Mucosa of descending colon (tissue), 3 donors: ENCODE measurements at regions of chr14 and their contacts with region 1.

Region 1: GRCh38 chr14:20413045-20413799 is at the start of gene TEP1:
- DNase-seq: peak; percentile 94 to 95 (median 94)
- ATAC-seq: peak; percentile 87
- H3K4me3 ChIP-seq: peak within 1 kb of the TSS; percentile 75
- H3K4me1 ChIP-seq: peaks cover 47% of the 10 kb centered on the region
- CTCF ChIP-seq: no peak
- total RNA-seq, gene TEP1: 68.7 to 121 (median 85.8) TPM

Region 2: DNA sequence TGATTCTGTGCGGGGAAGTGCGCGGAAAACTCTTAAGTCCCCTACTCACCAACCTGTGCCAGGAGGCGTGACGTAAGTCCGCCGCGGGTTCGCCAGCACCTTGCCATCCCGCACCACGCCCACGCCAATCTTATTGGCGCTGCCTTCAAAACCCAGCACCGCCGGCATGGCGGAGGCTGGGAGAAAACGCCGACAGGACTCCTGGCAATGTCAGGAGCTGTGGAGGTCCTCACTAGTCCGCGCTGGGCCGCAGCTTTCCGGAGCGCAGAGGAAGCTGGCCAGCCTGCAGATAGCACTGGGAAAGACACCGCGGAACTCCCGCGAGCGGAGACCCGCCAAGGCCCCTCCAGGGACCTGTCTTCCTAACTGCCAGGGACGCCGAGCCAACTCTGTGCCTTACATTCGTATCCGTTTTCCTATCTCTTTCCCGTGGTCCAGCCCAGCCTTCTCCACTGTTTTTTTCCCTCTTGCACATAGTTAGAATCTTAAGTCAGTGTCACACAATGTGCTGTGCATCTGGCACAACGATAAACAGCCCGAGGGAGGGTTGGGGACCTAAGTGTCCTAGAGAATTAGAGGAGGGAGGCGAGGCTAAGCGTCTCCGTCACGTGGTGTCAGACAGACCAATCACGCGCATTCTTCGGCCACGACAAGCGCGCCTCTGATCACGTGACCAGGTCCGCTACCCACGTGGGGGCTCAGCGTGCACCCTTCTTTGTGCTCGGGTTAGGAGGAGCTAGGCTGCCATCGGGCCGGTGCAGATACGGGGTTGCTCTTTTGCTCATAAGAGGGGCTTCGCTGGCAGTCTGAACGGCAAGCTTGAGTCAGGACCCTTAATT is 41.5 kb after region 1 on chr14 and contains the starts of genes APEX1 and OSGEP:
- intact Hi-C with region 1: loop called in 1 of 2 experiments (anchors 2 kb)
- DNase-seq: peak; percentile 96 to 99 (median 99)
- ATAC-seq: peak; percentile 93
- H3K4me3 ChIP-seq: peak within 1 kb of the TSS; percentile 42
- H3K4me1 ChIP-seq: peaks cover 25% of the 10 kb centered on the region
- CTCF ChIP-seq: no peak
- total RNA-seq, gene APEX1: 83.9 to 115 (median 93.8) TPM
- total RNA-seq, gene OSGEP: 32.7 to 52.0 (median 35.9) TPM

Region 3: GRCh38 chr14:20461274-20462001 is 48.2 kb after region 1 on chr14 and contains the start of gene PIP4P1:
- intact Hi-C with region 1: loop called in 1 of 2 experiments (anchors 5 kb)
- DNase-seq: peak; percentile 98 to 100 (median 99)
- ATAC-seq: peak; percentile 94
- H3K4me3 ChIP-seq: peak within 1 kb of the TSS; percentile 79
- H3K4me1 ChIP-seq: peaks cover 16% of the 10 kb centered on the region
- CTCF ChIP-seq: no peak
- total RNA-seq, gene PIP4P1: 40.6 to 48.4 (median 45.5) TPM

Region 4: DNA sequence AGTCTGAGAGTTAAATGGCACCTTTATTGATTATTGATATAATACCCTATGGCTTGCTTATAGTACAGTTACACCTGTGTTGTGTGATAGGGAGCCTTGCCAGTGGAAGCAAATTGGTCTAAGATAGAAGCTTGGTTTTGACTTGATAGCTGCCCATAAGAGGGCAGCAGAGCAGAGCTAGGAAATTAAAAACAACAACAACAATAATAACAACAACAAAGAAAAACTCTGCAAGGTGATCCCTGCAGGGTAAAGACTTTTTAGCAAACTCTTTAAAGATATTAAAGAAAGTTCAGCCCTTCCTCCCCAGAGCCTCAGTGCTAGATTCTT is 74.1 kb after region 1 on chr14:
- intact Hi-C with region 1: no loop called
- DNase-seq: no peak
- ATAC-seq: no peak
- H3K4me3 ChIP-seq: no peak overlapping the region
- H3K4me1 ChIP-seq: no peaks in the 10 kb centered on the region
- CTCF ChIP-seq: no peak

Region 5: GRCh38 chr14:20613094-20614037 is 200.1 kb after region 1 on chr14:
- intact Hi-C with region 1: loop called (anchors 5 kb)
- DNase-seq: peak; percentile 85 to 92 (median 86)
- ATAC-seq: peak; percentile 85
- H3K4me3 ChIP-seq: peak overlapping the region; percentile 6
- H3K4me1 ChIP-seq: peaks cover 12% of the 10 kb centered on the region
- CTCF ChIP-seq: peak; percentile 42

Region 6: DNA sequence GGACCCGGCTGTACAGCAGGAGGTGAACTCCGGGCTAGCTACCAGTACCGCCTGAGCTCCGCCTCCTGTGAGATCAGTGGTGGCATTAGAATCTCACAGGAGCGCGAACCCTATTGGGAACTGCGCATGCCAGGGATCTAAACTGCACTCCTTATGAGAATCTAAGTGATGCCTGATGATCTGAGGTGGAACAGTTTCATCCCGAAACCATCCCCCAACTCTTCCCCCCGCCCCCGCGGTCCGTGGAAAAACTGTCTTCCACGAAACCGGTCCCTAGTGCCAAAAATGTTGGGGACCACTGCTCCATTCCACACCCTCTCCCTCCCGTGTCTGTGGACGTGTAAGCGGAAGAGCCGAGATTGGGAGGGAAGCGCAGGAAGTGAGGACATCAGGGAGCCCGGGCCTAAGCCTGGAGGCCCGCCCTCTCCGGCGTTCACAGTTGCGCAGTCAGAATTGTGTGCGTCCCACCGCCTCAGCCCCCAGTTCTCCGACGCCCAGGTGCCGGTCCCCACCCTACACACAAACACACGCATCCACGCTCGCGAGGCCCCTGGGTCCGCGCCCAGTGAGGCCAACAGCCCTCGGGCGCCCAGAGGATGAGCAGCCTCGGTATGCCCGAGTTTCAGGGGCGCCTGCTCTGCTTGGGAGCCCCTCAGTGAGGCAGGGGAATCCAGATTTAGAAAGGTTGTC is 269.4 kb after region 1 on chr14:
- intact Hi-C with region 1: loop called in 1 of 2 experiments (anchors 5 kb)
- DNase-seq: peak; percentile 88 to 91 (median 89)
- ATAC-seq: peak; percentile 68
- H3K4me3 ChIP-seq: peak overlapping the region; percentile 52
- H3K4me1 ChIP-seq: peaks cover 43% of the 10 kb centered on the region
- CTCF ChIP-seq: no peak